ENCODE measurements at regions of chr4 and their contacts with region 1.

Region 1: DNA sequence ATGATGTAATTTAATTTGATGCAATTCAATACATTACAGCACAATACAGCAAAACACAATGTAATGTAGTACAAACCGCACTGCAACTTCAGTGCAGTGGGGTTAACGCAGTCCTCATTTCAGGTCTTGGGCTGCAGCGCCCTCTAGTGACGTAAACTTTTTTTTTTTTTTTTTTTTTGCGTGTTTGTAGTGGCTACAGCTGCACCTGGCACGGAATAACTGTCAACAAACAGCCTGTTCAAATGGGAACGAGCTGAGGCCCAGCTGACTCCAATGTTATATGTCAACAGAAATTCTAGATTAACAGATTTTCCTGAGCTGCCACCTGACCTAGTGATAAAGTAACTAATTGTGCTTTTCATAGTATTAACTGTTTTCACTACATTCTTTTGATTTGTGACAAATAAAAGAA is 33.5 kb upstream of the RASSF6 start:
- DNase-seq: no peak
- H3K4me3 ChIP-seq: no peak overlapping the region
- H3K27ac ChIP-seq: no peak overlapping the region
- H3K4me1 ChIP-seq: no peaks in the 10 kb centered on the region
- H3K27me3 ChIP-seq: no peaks in the 10 kb centered on the region
- CTCF ChIP-seq: peak in 3 of 4 experiments; percentile 38 to 65 (median 64)
- EP300 ChIP-seq: no peak
- POLR2A ChIP-seq: no peak

Region 2: GRCh38 chr4:73311428-73311827 is 342.3 kb before region 1 on chr4:
- intact Hi-C with region 1: loop called (anchors 5 kb)
- DNase-seq: no peak
- H3K4me3 ChIP-seq: no peak overlapping the region
- H3K27ac ChIP-seq: no peak overlapping the region
- H3K4me1 ChIP-seq: no peaks in the 10 kb centered on the region
- H3K27me3 ChIP-seq: no peaks in the 10 kb centered on the region
- CTCF ChIP-seq: peak in 1 of 4 experiments; percentile 29
- EP300 ChIP-seq: no peak
- POLR2A ChIP-seq: no peak

Region 3: GRCh38 chr4:73329300-73329699 is 324.4 kb before region 1 on chr4:
- intact Hi-C with region 1: no loop called
- DNase-seq: no peak
- H3K4me3 ChIP-seq: no peak overlapping the region
- H3K27ac ChIP-seq: no peak overlapping the region
- H3K4me1 ChIP-seq: no peaks in the 10 kb centered on the region
- H3K27me3 ChIP-seq: no peaks in the 10 kb centered on the region
- CTCF ChIP-seq: no peak
- EP300 ChIP-seq: no peak
- POLR2A ChIP-seq: no peak

Region 4: DNA sequence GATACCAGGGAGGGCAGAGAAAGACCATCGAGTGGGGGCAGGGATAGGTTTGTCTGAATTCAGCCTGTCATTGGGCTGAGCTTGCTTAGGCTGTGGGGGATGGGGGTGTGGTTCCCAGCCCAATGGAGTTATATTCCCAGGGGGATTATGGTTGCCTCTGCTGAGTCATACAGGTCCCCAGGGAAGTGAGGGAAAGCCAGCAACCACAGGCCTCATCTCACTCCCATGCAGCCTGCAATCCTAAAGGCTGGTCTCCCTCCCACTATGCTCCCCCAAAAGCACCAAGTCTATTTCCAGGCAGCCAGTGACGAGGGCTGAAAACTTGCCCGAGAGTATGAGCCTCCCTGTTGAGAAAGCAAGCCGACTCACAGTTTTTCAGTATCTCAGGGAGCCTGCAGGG is 132.9 kb before region 1 on chr4:
- intact Hi-C with region 1: no loop called
- DNase-seq: no peak
- H3K4me3 ChIP-seq: no peak overlapping the region
- H3K27ac ChIP-seq: no peak overlapping the region
- H3K4me1 ChIP-seq: no peaks in the 10 kb centered on the region
- H3K27me3 ChIP-seq: no peaks in the 10 kb centered on the region
- CTCF ChIP-seq: no peak
- EP300 ChIP-seq: no peak
- POLR2A ChIP-seq: no peak

Region 5: GRCh38 chr4:73573794-73574406 is 79.8 kb before region 1 on chr4:
- intact Hi-C with region 1: loop called (anchors 2 kb)
- DNase-seq: peak; percentile 79
- H3K4me3 ChIP-seq: no peak overlapping the region
- H3K27ac ChIP-seq: no peak overlapping the region
- H3K4me1 ChIP-seq: no peaks in the 10 kb centered on the region
- H3K27me3 ChIP-seq: no peaks in the 10 kb centered on the region
- CTCF ChIP-seq: peak; percentile 51 to 73 (median 66)
- EP300 ChIP-seq: no peak
- POLR2A ChIP-seq: no peak

Region 6: DNA sequence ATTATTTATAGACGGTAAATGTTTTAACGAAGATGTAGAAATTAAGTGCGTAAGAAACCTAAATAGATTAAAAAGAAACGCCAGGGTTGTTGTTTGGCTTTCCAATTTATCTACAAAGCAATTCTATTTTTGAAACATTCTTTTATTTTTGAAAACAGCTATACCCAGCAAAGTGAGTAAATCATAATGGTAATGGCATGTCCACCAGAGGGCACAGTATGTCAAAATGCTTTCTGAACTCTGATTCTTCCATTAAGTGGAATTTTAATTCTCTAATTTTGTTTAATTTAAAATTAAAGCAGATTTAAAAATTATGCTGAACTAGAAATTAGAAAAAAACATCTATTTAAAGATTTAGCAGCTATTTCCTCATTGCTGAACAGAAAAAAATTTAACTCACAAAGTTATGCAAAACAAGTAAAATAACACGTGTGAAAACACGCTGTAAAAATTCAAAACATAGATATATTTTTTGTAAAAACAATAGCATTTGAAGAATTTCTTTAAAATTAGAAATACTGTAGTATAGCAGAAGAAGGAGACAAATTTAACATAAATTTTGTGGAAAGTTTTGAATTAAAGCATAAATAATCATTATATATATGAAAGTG is 60.0 kb before region 1 on chr4:
- intact Hi-C with region 1: loop called (anchors 5 kb)
- DNase-seq: no peak
- H3K4me3 ChIP-seq: no peak overlapping the region
- H3K27ac ChIP-seq: no peak overlapping the region
- H3K4me1 ChIP-seq: peaks cover 0 to 12% (median 4%) of the 10 kb centered on the region in 4 donors
- H3K27me3 ChIP-seq: no peaks in the 10 kb centered on the region
- CTCF ChIP-seq: peak in 3 of 4 experiments; percentile 32 to 52 (median 37)
- EP300 ChIP-seq: no peak
- POLR2A ChIP-seq: no peak